ENCODE measurements at regions of chr7 and their contacts with region 1.

Region 1: GRCh38 chr7:30974605-30975255 is 11.0 kb downstream of the GHRHR start:
- DNase-seq: peak; percentile 84
- H3K4me3 Mint-ChIP-seq: no peak overlapping the region
- H3K27ac Mint-ChIP-seq: no peak overlapping the region
- H3K4me1 Mint-ChIP-seq: no peaks in the 10 kb centered on the region
- H3K27me3 Mint-ChIP-seq: peaks cover 27% of the 10 kb centered on the region

Region 2: GRCh38 chr7:30702200-30702599 is 272.5 kb before region 1 on chr7:
- CTCF ChIA-PET with region 1: no interaction called
- intact Hi-C with region 1: loop called (anchors 5 kb)
- DNase-seq: peak; percentile 61
- H3K4me3 Mint-ChIP-seq: no peak overlapping the region
- H3K27ac Mint-ChIP-seq: no peak overlapping the region
- H3K4me1 Mint-ChIP-seq: peaks cover 4% of the 10 kb centered on the region
- H3K27me3 Mint-ChIP-seq: no peaks in the 10 kb centered on the region

Region 3: DNA sequence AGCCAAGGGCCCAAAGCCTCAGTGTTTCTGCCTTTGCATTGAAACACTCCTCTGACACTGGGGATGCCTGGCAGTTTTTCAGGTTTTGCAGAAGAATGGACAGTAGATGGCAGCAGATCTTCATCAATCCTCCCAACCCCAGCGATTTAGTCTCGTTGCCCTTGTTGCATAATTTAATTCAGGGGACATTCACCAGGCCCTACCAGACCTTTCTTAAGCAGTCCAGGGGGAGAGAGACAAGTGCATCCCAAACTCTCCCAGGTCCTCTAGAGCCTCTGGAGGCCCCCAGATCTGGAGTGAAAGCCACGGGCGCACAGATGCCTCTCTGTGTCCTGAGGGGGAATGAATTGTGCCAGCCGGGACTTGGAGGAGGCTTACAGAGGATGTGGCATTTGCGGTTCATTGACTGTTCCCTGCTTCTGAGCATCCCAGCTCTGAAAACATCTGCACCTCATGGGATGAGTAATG is 173.9 kb before region 1 on chr7:
- CTCF ChIA-PET with region 1: interaction called, 4 read pairs
- intact Hi-C with region 1: loop called (anchors 1 kb)
- DNase-seq: peak; percentile 56
- H3K4me3 Mint-ChIP-seq: no peak overlapping the region
- H3K27ac Mint-ChIP-seq: no peak overlapping the region
- H3K4me1 Mint-ChIP-seq: peaks cover 13% of the 10 kb centered on the region
- H3K27me3 Mint-ChIP-seq: no peaks in the 10 kb centered on the region